ENCODE measurements at regions of chr16 and their contacts with region 1.

Region 1: DNA sequence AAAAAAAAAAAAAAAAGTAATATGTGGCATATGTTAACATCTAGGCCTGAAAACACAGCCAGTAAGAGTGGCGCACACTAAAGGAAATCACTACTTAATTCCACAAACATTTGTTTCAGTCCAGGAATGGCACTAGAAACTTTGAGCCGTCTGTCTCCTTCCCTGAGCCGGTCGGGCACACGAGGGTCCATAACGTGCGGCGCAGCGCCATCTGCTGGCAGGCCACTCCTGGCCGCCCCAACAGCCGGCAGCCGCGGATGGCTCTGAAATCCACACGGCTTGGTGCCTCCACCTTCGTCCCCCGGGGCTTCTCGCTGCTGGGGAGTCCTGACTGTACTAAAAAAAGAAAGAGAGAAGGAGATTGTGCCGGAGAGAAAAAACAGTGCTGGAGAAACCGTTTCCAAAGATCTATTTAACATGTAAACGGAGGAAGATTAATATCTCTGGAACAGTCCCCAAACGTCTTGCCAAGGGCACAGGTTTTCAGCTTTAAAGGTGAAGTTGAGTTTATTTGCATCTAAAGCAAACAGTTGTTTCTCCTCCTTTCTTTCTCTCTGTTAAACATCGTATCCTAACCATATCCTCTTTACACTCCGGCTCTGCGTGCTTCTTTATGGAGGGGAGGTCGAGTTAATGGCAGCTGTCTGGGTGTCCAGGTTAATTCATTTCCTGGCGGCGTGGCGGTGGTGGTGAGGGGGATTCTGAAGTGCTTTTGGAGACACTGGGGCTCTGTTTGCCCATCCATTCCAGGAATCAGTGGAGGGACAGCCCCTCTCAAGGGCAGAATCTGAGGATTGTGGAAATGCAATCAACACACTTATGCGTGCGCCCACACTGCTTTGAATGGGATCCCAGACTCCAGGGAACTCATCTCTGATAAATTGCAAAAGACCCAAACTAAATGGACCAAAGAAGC is 611.3 kb upstream of the SALL1 start:
- ATAC-seq: peak; percentile 80 to 99 (median 88)
- H3K4me3 ChIP-seq: peak overlapping the region in 1 of 5 donors; percentile 15
- H3K27ac ChIP-seq: peak overlapping the region in 1 of 2 donors; percentile 59
- H3K4me1 ChIP-seq: peaks cover 64% of the 10 kb centered on the region in 2 donors

Region 2: GRCh38 chr16:51392521-51393187 is 369.7 kb before region 1 on chr16:
- in situ Hi-C with region 1: loop called in 1 of 9 experiments (anchors 25 kb)
- ATAC-seq: peak; percentile 83 to 97 (median 89)
- H3K4me3 ChIP-seq: peak overlapping the region in 1 of 5 donors; percentile 3
- H3K27ac ChIP-seq: peak overlapping the region; percentile 57 to 84
- H3K4me1 ChIP-seq: peaks cover 15 to 16% of the 10 kb centered on the region in 2 donors

Measured in motor neuron (in vitro differentiated cells).